IMR-90 (cell line): ENCODE measurements at regions of chr9 and their contacts with region 1.

Region 1: GRCh38 chr9:20558566-20559016 is 63.7 kb downstream of the MLLT3 start:
- DNase-seq: peak; percentile 93
- ATAC-seq: peak; percentile 87
- H3K4me3 ChIP-seq: no peak overlapping the region
- H3K27ac ChIP-seq: peak overlapping the region; percentile 60; the same call in 1 of the 2 replicates
- H3K4me1 ChIP-seq: peaks cover 10% of the 10 kb centered on the region
- H3K27me3 ChIP-seq: no peaks in the 10 kb centered on the region
- CTCF ChIP-seq: no peak
- POLR2A ChIP-seq: no peak
- RAD21 ChIP-seq: no peak

Region 2: DNA sequence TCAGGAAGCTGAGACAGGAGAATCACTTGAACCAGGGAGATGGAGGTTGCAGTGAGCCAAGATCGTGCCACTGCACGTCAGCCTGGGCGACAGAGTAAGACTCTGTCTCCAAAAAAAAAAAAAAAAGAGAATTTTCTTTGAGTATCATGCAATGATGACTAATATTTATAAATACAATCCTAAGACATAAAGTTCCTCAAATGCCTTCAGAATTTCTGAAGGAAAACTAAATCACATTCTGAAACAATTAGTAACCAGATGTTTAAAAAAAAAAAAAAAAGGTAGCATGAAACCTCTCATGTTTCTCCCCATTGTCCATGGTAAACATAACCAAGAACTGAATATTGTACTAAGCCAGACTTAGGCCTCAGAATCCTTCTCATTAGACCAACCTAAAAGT is 40.6 kb after region 1 on chr9:
- CTCF ChIA-PET with region 1: no interaction called
- POLR2A ChIA-PET with region 1: no interaction called
- dilution Hi-C with region 1: no loop called
- in situ Hi-C with region 1: no loop called
- intact Hi-C with region 1: loop called (anchors 5 kb)
- DNase-seq: peak; percentile 78
- ATAC-seq: peak; percentile 81
- H3K4me3 ChIP-seq: no peak overlapping the region
- H3K27ac ChIP-seq: peak overlapping the region; percentile 47
- H3K4me1 ChIP-seq: peaks cover 3% of the 10 kb centered on the region; the same call in 1 of the 2 replicates
- H3K27me3 ChIP-seq: no peaks in the 10 kb centered on the region
- CTCF ChIP-seq: no peak
- POLR2A ChIP-seq: no peak
- RAD21 ChIP-seq: no peak

Region 3: DNA sequence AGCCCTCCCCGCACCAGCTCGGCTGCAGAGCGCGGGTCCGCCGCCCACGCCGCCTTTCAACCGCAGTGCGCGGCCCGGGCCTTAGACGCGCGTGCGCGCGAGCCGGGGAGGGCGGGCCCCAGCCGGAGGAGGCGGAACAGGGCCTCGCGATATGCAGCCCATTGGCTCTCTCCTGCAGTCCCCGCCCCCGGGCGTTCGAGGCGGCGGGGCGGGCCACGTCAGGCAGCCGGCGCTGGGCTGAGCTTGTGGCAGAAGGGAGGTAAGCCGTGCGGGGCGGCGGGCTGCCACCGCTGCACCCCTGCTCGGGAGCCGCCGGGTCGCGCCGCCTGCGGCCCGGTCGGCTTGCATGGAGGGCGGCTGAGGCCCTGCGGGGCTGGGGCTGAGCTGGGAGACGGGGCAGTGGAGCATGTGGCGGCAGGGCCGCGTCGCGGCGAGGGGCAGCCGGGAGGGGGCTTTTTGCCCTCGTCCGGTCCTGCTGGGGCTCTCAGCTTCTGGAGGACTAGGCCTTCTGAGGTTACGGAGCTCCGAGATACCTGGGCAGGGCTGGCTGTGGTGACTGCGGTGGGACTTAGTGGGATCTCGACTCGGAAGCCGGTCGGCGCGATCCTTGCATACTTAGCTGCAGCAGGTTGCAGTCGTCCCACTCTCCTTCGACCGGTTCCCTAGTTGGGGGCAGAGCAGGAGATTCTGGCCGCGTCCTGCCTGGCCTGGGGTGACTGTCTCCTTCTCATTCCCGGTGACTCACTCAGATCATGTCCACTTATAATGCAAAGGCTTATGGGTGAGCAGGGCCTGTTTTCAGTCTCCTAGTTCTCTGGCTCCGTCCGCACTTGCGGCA is 125.7 kb after region 1 on chr9 and contains the start of gene FOCAD:
- CTCF ChIA-PET with region 1: no interaction called
- POLR2A ChIA-PET with region 1: no interaction called
- dilution Hi-C with region 1: no loop called
- in situ Hi-C with region 1: no loop called
- intact Hi-C with region 1: loop called (anchors 1 kb)
- DNase-seq: peak; percentile 92
- ATAC-seq: peak; percentile 99
- H3K4me3 ChIP-seq: peak within 1 kb of the TSS; percentile 60
- H3K27ac ChIP-seq: peak within 1 kb of the TSS; percentile 61
- H3K4me1 ChIP-seq: 0 out of 2 replicates have a peak, but pooled peaks cover under 1% of the 10 kb centered on the region
- H3K27me3 ChIP-seq: no peaks in the 10 kb centered on the region
- CTCF ChIP-seq: no peak
- POLR2A ChIP-seq: peak; percentile 95
- RAD21 ChIP-seq: no peak
- total RNA-seq, gene FOCAD: 73.9 and 91.2 TPM in 2 replicates